ENCODE measurements at regions of chr1 and their contacts with region 1.

Region 1: DNA sequence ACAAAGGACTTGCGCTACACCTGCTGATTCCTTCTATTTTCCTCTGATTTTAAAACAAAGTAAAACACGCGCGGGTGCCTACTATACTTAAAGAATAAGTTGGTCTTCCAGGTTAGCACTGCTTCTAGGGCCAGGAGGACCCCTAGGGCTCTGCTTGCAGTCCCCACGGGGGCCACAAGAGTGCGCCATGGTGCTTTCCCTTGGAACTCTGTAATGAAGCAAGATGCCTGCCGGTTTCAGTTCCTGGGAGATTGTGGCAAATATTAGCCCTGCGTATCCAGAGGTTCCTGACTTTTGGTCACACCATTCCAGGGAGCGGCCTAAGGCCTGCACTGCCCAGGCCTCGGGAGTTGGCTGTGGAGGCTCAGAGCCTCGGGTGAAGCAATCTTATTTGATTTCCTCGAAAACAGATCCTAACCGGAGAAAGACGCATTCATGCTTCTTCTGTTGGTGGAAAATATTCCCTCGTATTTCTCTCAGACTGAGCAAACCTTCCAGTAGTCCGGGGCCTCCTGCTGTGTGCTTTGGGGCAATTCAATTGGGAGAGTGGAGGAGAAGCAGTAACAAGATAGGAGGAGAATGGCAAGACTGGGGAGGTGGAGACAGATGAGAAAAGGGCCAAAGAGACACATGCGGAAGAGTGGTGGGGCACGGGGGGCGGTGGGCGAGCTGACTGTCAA is 25.3 kb downstream of the ADAM30 start:
- DNase-seq: peak; percentile 58
- CTCF ChIP-seq: peak; percentile 83

Region 2: DNA sequence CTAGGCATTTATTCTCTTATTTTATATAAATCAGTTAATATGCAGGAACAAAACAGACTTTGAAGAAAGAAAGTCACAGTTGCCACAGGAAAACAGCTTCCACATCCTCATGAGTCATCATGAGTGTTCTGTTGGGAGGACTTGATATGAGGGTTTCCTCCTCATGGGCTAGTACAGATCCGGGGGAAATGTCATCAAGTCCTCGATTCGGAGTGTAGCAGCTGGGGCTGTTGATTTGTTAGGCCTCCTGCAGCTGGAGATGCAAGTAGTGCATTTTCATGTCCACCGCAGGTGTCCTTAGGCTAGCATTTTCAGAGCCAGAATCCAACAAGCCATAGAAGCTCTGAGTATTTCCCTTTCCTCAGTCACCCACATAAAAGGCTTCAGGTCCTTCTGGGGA is 11.4 kb before region 1 on chr1:
- CTCF ChIA-PET with region 1: interaction called, 18 read pairs
- POLR2A ChIA-PET with region 1: no interaction called
- DNase-seq: no peak
- CTCF ChIP-seq: no peak

Region 3: GRCh38 chr1:119885903-119886783 is 15.1 kb after region 1 on chr1:
- CTCF ChIA-PET with region 1: interaction called, 13 read pairs
- POLR2A ChIA-PET with region 1: no interaction called
- DNase-seq: peak; percentile 48
- CTCF ChIP-seq: peak; percentile 78

Region 4: GRCh38 chr1:119906927-119907652 is 36.0 kb after region 1 on chr1:
- CTCF ChIA-PET with region 1: no interaction called
- POLR2A ChIA-PET with region 1: no interaction called
- DNase-seq: no peak
- CTCF ChIP-seq: no peak

Measured in GM10248 (cell line).